CD4-positive, alpha-beta T cell (primary cell): ENCODE measurements at regions of chr10 and their contacts with region 1.

Region 1: DNA sequence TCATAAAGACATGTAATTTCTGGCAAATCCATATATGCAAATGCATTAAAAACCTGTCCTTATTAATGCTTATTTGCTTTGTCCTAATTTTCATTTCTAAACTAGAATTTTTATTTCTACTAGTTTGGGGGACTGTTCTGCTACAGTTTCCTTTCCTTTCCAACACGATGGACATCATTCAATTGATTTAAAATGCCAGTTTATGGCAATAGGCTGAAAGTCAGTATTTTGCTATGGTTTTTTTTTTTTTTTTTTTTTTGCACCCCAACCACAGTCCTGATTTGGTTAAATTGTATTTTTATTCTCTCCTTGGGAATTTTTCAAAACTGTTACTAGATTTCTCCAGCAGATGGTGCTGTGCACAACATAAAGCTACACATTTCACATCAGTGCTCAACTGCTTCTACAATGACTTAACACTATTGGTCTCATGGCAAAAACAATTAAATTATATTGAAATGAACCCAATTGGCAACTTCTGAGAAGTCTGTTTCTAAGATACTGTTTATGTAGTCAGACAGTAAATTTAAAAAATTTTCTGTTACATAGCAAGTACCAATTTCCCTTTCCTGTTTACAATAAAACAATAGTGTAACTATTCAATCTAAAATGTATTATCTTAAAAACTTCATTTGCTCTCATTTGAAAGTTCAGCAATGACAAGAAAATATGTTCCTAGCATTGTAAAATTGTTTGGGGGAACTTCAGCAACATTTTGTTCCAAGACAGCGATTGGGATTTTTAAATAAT is 193.8 kb upstream of the CCDC6 start:
- DNase-seq: peak in 4 of 14 experiments; percentile 6 to 67 (median 56)
- ATAC-seq: peak; percentile 66
- H3K4me3 ChIP-seq: no peak overlapping the region
- H3K4me3 Mint-ChIP-seq: no peak overlapping the region
- H3K27ac ChIP-seq: no peak overlapping the region
- H3K27ac Mint-ChIP-seq: no peak overlapping the region
- H3K4me1 ChIP-seq: no peaks in the 10 kb centered on the region
- H3K4me1 Mint-ChIP-seq: no peaks in the 10 kb centered on the region
- H3K27me3 ChIP-seq: no peaks in the 10 kb centered on the region
- H3K27me3 Mint-ChIP-seq: no peaks in the 10 kb centered on the region
- CTCF ChIP-seq: peak; percentile 76

Region 2: GRCh38 chr10:60208676-60209269 is 108.6 kb after region 1 on chr10:
- CTCF ChIA-PET with region 1: no interaction called
- POLR2A ChIA-PET with region 1: no interaction called
- intact Hi-C with region 1: no loop called
- DNase-seq: no peak
- ATAC-seq: no peak
- H3K4me3 ChIP-seq: no peak overlapping the region
- H3K4me3 Mint-ChIP-seq: no peak overlapping the region
- H3K27ac ChIP-seq: no peak overlapping the region
- H3K27ac Mint-ChIP-seq: no peak overlapping the region
- H3K4me1 ChIP-seq: peaks cover 7% of the 10 kb centered on the region
- H3K4me1 Mint-ChIP-seq: peaks cover 31% of the 10 kb centered on the region
- H3K27me3 ChIP-seq: no peaks in the 10 kb centered on the region
- H3K27me3 Mint-ChIP-seq: no peaks in the 10 kb centered on the region
- CTCF ChIP-seq: peak; percentile 27

Region 3: DNA sequence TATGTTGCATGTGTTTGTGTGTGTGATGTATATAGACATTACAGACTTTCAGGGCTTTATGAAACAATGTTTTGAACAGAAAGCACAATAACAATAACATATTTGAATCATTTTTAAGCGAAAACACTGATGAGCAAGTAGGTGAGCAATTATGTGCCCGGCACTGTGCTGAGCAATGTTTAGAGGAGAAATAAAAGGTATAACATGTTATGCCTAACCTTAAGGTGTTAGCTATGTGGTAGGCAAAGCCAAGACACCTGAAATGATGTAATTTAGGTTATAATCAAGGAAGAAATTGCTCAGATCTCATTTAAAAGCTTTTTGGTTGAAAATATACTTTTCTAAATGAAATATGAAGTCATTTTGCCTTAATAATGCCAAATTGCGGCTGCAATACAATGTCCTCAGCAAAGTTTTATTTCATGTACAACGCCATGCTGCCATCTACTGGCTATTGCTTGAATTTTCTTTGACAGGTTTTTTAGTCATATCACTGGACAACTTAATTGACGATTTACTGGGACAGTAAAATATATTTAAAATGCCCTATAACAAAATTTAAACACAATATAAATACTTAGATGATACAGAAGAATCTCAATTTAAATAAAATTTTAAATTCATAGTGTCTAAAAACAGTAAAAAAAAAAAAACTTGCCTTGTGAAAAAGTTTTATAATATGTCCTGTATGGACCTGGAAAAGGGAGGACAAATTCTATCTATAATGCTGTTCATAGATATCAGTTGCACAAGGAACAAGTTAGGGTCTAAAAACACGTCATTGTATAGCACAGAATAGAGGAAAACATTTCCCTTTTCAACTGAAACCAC is 547.0 kb after region 1 on chr10:
- CTCF ChIA-PET with region 1: no interaction called
- POLR2A ChIA-PET with region 1: no interaction called
- intact Hi-C with region 1: loop called (anchors 1 to 2 kb)
- DNase-seq: peak in 9 of 14 experiments; percentile 8 to 78 (median 33)
- ATAC-seq: peak; percentile 40
- H3K4me3 ChIP-seq: no peak overlapping the region
- H3K4me3 Mint-ChIP-seq: no peak overlapping the region
- H3K27ac ChIP-seq: no peak overlapping the region
- H3K27ac Mint-ChIP-seq: peak overlapping the region; percentile 5
- H3K4me1 ChIP-seq: peaks cover 6% of the 10 kb centered on the region
- H3K4me1 Mint-ChIP-seq: peaks cover 66% of the 10 kb centered on the region
- H3K27me3 ChIP-seq: no peaks in the 10 kb centered on the region
- H3K27me3 Mint-ChIP-seq: no peaks in the 10 kb centered on the region
- CTCF ChIP-seq: peak; percentile 91

Region 4: GRCh38 chr10:61284222-61284890 is 1184.2 kb after region 1 on chr10:
- CTCF ChIA-PET with region 1: no interaction called
- POLR2A ChIA-PET with region 1: no interaction called
- intact Hi-C with region 1: loop called in 1 of 2 experiments (anchors 10 kb)
- DNase-seq: peak in 3 of 14 experiments; percentile 53 to 65 (median 59)
- ATAC-seq: peak; percentile 31
- H3K4me3 ChIP-seq: peak overlapping the region; percentile 7
- H3K4me3 Mint-ChIP-seq: peak overlapping the region; percentile 74
- H3K27ac ChIP-seq: no peak overlapping the region
- H3K27ac Mint-ChIP-seq: peak overlapping the region; percentile 16
- H3K4me1 ChIP-seq: no peaks in the 10 kb centered on the region
- H3K4me1 Mint-ChIP-seq: peaks cover 26% of the 10 kb centered on the region
- H3K27me3 ChIP-seq: no peaks in the 10 kb centered on the region
- H3K27me3 Mint-ChIP-seq: no peaks in the 10 kb centered on the region
- CTCF ChIP-seq: peak; percentile 93